ENCODE measurements at regions of chr5 and their contacts with region 1.

Region 1: DNA sequence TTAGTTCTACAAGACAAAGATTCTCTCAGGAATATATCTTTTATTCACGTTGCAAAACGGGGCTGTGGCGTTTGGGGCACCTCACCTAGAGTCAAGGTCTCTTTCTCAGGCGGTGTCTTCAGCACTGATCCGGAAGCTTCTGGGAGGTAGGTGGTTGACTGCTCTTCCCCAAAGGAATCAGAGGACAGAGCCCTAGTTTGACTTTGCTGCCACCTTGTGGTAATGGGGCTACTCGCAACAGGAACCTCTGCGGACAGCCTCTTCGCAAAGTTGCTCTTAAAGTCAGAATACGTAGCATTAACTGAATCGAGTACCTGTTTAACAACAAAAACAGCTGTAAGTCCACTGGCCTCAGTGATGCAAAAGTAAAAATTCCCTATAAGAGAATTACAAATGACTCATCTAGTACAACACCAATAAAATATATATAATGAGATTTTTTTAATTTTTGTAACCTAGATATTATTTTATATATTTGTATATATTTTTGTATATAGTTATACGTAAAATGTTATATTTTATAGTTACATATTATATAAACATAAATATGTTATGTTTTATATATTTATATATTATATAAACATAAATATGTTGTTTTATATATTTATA is 13.3 kb upstream of the GPX8 start:
- DNase-seq: peak; percentile 62
- H3K4me3 ChIP-seq: no peak overlapping the region
- H3K27ac ChIP-seq: no peak overlapping the region
- H3K4me1 ChIP-seq: peaks cover 5% of the 10 kb centered on the region
- H3K27me3 ChIP-seq: peaks cover 75% of the 10 kb centered on the region
- CTCF ChIP-seq: peak; percentile 96

Region 2: GRCh38 chr5:54905943-54906537 is 240.6 kb before region 1 on chr5:
- intact Hi-C with region 1: loop called (anchors 5 kb)
- DNase-seq: peak; percentile 46
- H3K4me3 ChIP-seq: no peak overlapping the region
- H3K27ac ChIP-seq: no peak overlapping the region
- H3K4me1 ChIP-seq: no peaks in the 10 kb centered on the region
- H3K27me3 ChIP-seq: peaks cover 33% of the 10 kb centered on the region
- CTCF ChIP-seq: peak; percentile 72

Region 3: DNA sequence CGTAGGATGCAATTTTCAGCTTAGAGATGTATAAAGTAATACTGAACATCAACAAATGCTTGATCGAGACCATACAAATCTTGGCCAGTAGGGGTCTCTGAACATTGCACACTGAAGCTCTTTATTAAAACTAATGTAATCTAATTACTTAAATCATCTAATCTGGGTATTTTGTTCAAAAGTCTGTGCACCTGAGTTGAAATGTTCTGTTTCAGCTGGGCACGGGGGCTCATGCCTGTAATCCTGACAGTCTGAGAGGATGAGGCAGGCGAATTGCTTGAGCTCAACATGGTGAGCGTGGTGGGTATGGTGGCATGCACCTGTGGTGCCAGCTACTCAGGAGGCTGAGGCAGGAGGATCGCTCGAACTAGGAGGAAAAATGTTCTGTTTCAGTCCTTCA is 202.3 kb before region 1 on chr5:
- intact Hi-C with region 1: loop called (anchors 10 kb)
- DNase-seq: no peak
- H3K4me3 ChIP-seq: no peak overlapping the region
- H3K27ac ChIP-seq: no peak overlapping the region
- H3K4me1 ChIP-seq: no peaks in the 10 kb centered on the region
- H3K27me3 ChIP-seq: peaks cover 20% of the 10 kb centered on the region
- CTCF ChIP-seq: peak; percentile 76